ENCODE measurements at regions of chr18 and their contacts with region 1.

Region 1: GRCh38 chr18:59323931-59324622 is 5.6 kb upstream of the CPLX4 start:
- DNase-seq: no peak
- ATAC-seq: no peak
- H3K4me3 ChIP-seq: no peak overlapping the region
- H3K27ac ChIP-seq: no peak overlapping the region
- H3K4me1 ChIP-seq: no peaks in the 10 kb centered on the region
- H3K27me3 ChIP-seq: peaks cover 0 to 6% (median 0%) of the 10 kb centered on the region in 9 donors
- CTCF ChIP-seq: no peak
- POLR2A ChIP-seq: no peak

Region 2: GRCh38 chr18:59379772-59380522 is 55.9 kb after region 1 on chr18:
- intact Hi-C with region 1: loop called in 1 of 10 experiments (anchors 5 kb)
- DNase-seq: no peak
- ATAC-seq: no peak
- H3K4me3 ChIP-seq: no peak overlapping the region
- H3K27ac ChIP-seq: no peak overlapping the region
- H3K4me1 ChIP-seq: peaks cover 0 to 9% (median 0%) of the 10 kb centered on the region in 12 donors
- H3K27me3 ChIP-seq: peaks cover 0 to 8% (median 0%) of the 10 kb centered on the region in 9 donors
- CTCF ChIP-seq: no peak
- POLR2A ChIP-seq: no peak

Measured in heart left ventricle (tissue), 16 donors.